GM13976 (cell line): ENCODE measurements at regions of chr7 and their contacts with region 1.

Region 1: GRCh38 chr7:38222481-38223096 is 44.5 kb downstream of the STARD3NL start:
- DNase-seq: peak; percentile 32
- CTCF ChIP-seq: peak; percentile 78

Region 2: DNA sequence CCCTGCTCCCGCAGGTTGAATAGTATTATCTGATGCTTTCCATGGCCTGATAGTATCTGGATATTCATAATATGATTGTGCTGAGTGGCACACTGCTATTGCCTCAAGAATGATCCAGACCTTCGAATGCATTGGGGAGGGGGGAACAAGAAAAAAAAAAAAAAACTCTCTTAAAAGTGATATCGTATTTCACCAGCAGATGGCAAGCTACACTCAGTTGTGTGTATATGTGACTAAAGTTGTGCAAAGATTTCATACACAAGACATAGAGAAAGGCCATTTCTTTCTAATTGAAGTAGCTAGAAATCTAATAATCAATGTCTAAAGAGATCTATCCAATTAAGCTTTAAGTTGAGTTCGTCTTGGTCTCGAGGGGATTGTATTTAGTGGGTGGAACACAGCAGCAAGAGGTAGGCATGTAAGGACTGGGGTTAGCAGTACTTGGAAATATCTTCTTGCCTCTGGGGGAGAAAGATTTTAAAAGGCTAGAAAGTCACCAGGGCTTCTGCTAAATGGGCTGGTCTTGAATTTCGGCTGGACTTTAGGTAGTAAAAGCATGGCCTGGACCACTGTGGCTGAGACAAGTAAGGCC is 321.3 kb before region 1 on chr7:
- in situ Hi-C with region 1: loop called (anchors 10 kb)
- DNase-seq: no peak
- CTCF ChIP-seq: peak; percentile 40

Region 3: GRCh38 chr7:38318803-38319416 is 96.3 kb after region 1 on chr7:
- in situ Hi-C with region 1: loop called (anchors 10 kb)
- DNase-seq: peak; percentile 67
- CTCF ChIP-seq: peak; percentile 81

Region 4: GRCh38 chr7:38506756-38507155 is 284.2 kb after region 1 on chr7:
- in situ Hi-C with region 1: no loop called
- DNase-seq: no peak
- CTCF ChIP-seq: no peak